CD4-positive, alpha-beta memory T cell (primary cell): ENCODE measurements at regions of chr10 and their contacts with region 1.

Region 1: DNA sequence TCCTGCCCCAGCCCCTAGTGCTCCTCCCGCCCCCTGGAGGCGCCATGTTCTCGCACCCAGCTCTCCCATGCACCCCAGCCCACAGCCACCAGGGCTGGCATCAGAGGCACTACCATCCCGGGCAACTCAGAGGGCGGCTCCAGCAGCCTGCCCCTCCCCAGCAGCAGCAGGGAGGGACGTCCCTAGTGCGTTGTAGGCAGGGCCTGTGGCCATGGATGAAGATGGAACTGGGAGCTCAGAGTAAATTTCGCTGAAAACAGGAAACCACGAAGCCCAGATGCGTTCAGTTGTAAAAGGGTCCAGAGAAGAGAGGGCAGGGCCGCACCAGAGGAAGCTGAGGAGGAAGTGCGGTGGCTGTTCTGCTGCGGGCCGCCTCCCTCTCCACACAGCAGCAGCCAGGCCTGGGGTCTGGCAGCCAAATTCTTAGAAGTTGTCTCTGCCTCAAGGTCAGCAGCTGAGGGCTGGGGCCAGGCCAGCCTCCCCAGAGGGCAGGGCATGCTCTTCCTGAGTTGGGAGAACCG is 24.6 kb downstream of the VSIR start:
- DNase-seq: peak; percentile 86 to 90 (median 87)
- H3K4me3 ChIP-seq: peak overlapping the region in 1 of 2 donors; percentile 39
- H3K4me3 Mint-ChIP-seq: peak overlapping the region; percentile 76 to 89 (median 84)
- H3K27ac ChIP-seq: peak overlapping the region; percentile 58
- H3K27ac Mint-ChIP-seq: peak overlapping the region; percentile 92 to 99 (median 98)
- H3K4me1 ChIP-seq: peaks cover 100% of the 10 kb centered on the region
- H3K4me1 Mint-ChIP-seq: peaks cover 74 to 98% (median 92%) of the 10 kb centered on the region in 4 donors
- H3K27me3 ChIP-seq: no peaks in the 10 kb centered on the region
- H3K27me3 Mint-ChIP-seq: no peaks in the 10 kb centered on the region

Region 2: GRCh38 chr10:71713135-71714030 is 35.3 kb before region 1 on chr10:
- CTCF ChIA-PET with region 1: interaction called, 17 read pairs
- POLR2A ChIA-PET with region 1: interaction called, 1,191 read pairs
- intact Hi-C with region 1: no loop called
- DNase-seq: peak in 3 of 5 donors; percentile 35 to 51 (median 49)
- H3K4me3 ChIP-seq: peak overlapping the region; percentile 1 to 21
- H3K4me3 Mint-ChIP-seq: peak overlapping the region; percentile 76 to 93 (median 85)
- H3K27ac ChIP-seq: peak overlapping the region; percentile 69
- H3K27ac Mint-ChIP-seq: peak overlapping the region; percentile 96 to 99 (median 98)
- H3K4me1 ChIP-seq: peaks cover 62% of the 10 kb centered on the region
- H3K4me1 Mint-ChIP-seq: peaks cover 33 to 84% (median 62%) of the 10 kb centered on the region in 4 donors
- H3K27me3 ChIP-seq: no peaks in the 10 kb centered on the region
- H3K27me3 Mint-ChIP-seq: no peaks in the 10 kb centered on the region